ENCODE measurements at regions of chr6 and their contacts with region 1.

Region 1: GRCh38 chr6:129936329-129937165 is 75.4 kb upstream of the TMEM244 start:
- DNase-seq: no peak
- ATAC-seq: peak; percentile 50
- H3K4me3 Mint-ChIP-seq: no peak overlapping the region
- H3K27ac Mint-ChIP-seq: no peak overlapping the region
- H3K4me1 Mint-ChIP-seq: peaks cover 4% of the 10 kb centered on the region
- H3K27me3 Mint-ChIP-seq: peaks cover 18% of the 10 kb centered on the region
- CTCF ChIP-seq: peak; percentile 42

Region 2: DNA sequence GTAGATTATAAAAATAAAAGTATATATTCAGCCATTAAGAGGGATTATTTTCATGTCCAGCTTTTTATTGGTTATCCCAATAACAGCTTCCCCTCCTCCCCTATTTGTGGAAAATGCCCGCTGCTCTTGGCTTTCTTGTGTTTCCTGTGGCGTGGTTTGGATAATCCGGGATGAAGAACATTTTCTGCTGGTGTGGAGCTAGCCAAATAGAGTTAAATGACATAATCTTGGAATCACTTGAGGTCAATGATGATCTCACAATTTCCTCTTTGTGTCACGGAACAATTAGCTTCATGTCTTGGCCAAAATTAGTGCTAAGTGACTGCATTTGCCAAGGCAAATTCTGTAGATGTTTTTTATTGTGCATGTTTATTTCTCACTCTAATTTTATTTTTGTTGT is 659.6 kb before region 1 on chr6:
- CTCF ChIA-PET with region 1: no interaction called
- POLR2A ChIA-PET with region 1: no interaction called
- intact Hi-C with region 1: no loop called
- DNase-seq: no peak
- ATAC-seq: no peak
- H3K4me3 Mint-ChIP-seq: no peak overlapping the region
- H3K27ac Mint-ChIP-seq: no peak overlapping the region
- H3K4me1 Mint-ChIP-seq: no peaks in the 10 kb centered on the region
- H3K27me3 Mint-ChIP-seq: no peaks in the 10 kb centered on the region
- CTCF ChIP-seq: no peak

Region 3: DNA sequence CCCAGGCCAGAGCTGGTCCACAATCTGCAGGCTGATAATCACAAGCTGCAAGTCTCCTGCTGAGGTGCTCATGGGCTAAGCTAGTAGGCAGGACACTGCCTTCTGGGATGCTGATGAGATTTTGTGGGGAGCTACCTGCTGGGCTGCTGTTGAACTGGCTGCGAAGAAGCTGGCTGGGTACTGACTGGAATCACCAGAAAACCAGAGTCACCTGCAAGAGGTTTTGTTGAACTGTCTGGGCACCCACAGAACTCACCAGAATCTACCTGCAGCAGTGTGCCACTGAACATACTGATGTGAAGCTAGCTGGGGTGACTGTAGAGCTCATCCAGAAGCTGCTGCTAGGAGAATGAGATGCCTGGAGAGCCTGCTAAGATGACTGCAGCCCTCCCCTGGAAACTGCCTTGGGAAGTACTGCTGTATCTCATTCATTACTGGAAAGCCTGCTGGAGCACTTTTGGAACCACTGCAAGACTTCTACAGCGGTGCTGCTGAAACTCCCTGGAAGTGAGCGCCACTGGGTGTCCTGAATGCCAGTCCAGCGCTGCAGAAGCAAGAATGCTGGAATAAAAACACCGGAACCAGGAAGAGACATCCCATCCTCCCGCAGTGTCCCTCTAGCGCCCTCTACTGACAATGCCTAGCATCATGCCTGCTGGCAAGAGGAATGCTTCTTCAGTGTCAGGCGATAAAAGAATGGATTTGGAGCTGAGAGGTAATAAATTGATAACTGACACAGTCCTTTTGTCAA is 161.7 kb before region 1 on chr6:
- CTCF ChIA-PET with region 1: no interaction called
- POLR2A ChIA-PET with region 1: no interaction called
- intact Hi-C with region 1: loop called (anchors 5 kb)
- DNase-seq: no peak
- ATAC-seq: no peak
- H3K4me3 Mint-ChIP-seq: no peak overlapping the region
- H3K27ac Mint-ChIP-seq: no peak overlapping the region
- H3K4me1 Mint-ChIP-seq: no peaks in the 10 kb centered on the region
- H3K27me3 Mint-ChIP-seq: peaks cover 11% of the 10 kb centered on the region
- CTCF ChIP-seq: no peak

Region 4: GRCh38 chr6:129860908-129861665 is 75.5 kb before region 1 on chr6 and contains the start of gene TMEM244:
- CTCF ChIA-PET with region 1: no interaction called
- POLR2A ChIA-PET with region 1: no interaction called
- intact Hi-C with region 1: no loop called
- DNase-seq: no peak
- ATAC-seq: peak; percentile 21
- H3K4me3 Mint-ChIP-seq: peak within 1 kb of the TSS; percentile 45
- H3K27ac Mint-ChIP-seq: peak within 1 kb of the TSS; percentile 36
- H3K4me1 Mint-ChIP-seq: peaks cover 9% of the 10 kb centered on the region
- H3K27me3 Mint-ChIP-seq: no peaks in the 10 kb centered on the region
- CTCF ChIP-seq: no peak
- total RNA-seq, gene TMEM244: not detected in 2 replicates

Region 5: GRCh38 chr6:129893640-129894039 is 42.9 kb before region 1 on chr6:
- CTCF ChIA-PET with region 1: no interaction called
- POLR2A ChIA-PET with region 1: no interaction called
- intact Hi-C with region 1: loop called (anchors 2 kb)
- DNase-seq: no peak
- ATAC-seq: no peak
- H3K4me3 Mint-ChIP-seq: no peak overlapping the region
- H3K27ac Mint-ChIP-seq: no peak overlapping the region
- H3K4me1 Mint-ChIP-seq: peaks cover 22% of the 10 kb centered on the region
- H3K27me3 Mint-ChIP-seq: no peaks in the 10 kb centered on the region
- CTCF ChIP-seq: no peak